ENCODE measurements at regions of chr21 and their contacts with region 1.

Region 1: GRCh38 chr21:29002442-29003144 is 9.9 kb upstream of the LTN1 start:
- DNase-seq: peak; percentile 97
- H3K4me3 ChIP-seq: peak overlapping the region; percentile 73
- H3K27ac ChIP-seq: peak overlapping the region; percentile 84 to 97
- H3K4me1 ChIP-seq: peaks cover 0 to 3% of the 10 kb centered on the region in 2 experiments; a peak in 2 of 4 replicates
- H3K27me3 ChIP-seq: no peaks in the 10 kb centered on the region
- CTCF ChIP-seq: no peak
- EP300 ChIP-seq: peak in 1 of 2 experiments; percentile 47; a peak in 2 of 4 replicates
- RAD21 ChIP-seq: no peak; the same call in 1 of the 2 replicates

Region 2: GRCh38 chr21:29018540-29018939 is 15.9 kb after region 1 on chr21:
- CTCF ChIA-PET with region 1: interaction called, 3 read pairs
- POLR2A ChIA-PET with region 1: interaction called, 55 read pairs
- DNase-seq: peak; percentile 35
- H3K4me3 ChIP-seq: peak overlapping the region; percentile 72 to 93
- H3K27ac ChIP-seq: peak overlapping the region; percentile 76 to 88
- H3K4me1 ChIP-seq: peaks cover 5 to 6% of the 10 kb centered on the region in 2 experiments; a peak in 2 of 4 replicates
- H3K27me3 ChIP-seq: no peaks in the 10 kb centered on the region
- CTCF ChIP-seq: no peak
- EP300 ChIP-seq: no peak
- RAD21 ChIP-seq: no peak

Region 3: DNA sequence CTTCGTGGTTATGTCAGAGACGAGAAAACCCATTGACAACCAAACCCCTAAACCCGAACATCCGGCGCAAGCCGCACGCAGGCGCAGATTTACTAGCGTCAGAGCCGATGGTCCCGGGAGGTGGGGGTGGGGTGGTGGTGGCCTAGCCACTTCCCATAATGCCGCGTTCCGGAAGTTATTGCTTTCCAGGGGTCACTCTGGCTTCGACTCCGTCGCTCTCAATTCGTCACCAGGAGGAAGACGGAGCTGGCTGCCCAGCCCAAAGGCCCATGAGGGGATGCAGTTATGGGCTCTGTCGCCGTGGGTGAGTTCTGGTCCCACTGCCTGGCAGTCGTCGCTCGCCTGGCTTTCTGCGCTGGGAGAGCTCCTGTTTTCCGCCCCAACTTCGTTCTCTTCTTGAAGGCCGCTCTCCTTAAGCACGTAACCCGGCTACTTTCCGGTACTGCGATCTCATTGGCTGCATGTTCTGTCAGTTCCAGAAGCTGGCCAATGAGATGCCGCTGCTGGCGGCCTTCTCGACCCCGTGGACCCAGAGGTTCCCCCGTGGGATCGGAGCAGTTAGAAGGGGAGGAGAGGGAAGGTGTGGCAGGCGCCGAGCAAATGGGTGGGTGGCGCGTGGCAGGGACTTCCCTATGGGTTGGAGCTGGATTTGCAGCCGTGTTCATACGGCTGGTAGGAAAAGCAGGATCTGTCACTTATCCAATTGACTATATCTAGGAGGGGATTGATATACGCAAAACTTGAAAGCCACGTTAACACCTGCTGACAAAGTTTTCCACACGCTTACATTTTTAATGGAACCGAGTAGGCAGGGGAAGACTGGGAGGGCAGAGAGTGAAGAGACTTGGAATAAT is 22.1 kb after region 1 on chr21 and contains the start of gene USP16:
- CTCF ChIA-PET with region 1: interaction called, 3 read pairs
- POLR2A ChIA-PET with region 1: interaction called, 55 read pairs
- DNase-seq: peak; percentile 95
- H3K4me3 ChIP-seq: peak within 1 kb of the TSS; percentile 69 to 70
- H3K27ac ChIP-seq: peak within 1 kb of the TSS; percentile 97
- H3K4me1 ChIP-seq: peaks cover 3 to 15% of the 10 kb centered on the region in 2 experiments; a peak in 3 of 4 replicates
- H3K27me3 ChIP-seq: no peaks in the 10 kb centered on the region
- CTCF ChIP-seq: peak; percentile 12; the same call in 1 of the 2 replicates
- EP300 ChIP-seq: no peak; a peak in 2 of 4 replicates
- RAD21 ChIP-seq: no peak
- polyA plus RNA-seq, gene USP16: 9.2 and 12.2 TPM in 2 replicates

Region 4: DNA sequence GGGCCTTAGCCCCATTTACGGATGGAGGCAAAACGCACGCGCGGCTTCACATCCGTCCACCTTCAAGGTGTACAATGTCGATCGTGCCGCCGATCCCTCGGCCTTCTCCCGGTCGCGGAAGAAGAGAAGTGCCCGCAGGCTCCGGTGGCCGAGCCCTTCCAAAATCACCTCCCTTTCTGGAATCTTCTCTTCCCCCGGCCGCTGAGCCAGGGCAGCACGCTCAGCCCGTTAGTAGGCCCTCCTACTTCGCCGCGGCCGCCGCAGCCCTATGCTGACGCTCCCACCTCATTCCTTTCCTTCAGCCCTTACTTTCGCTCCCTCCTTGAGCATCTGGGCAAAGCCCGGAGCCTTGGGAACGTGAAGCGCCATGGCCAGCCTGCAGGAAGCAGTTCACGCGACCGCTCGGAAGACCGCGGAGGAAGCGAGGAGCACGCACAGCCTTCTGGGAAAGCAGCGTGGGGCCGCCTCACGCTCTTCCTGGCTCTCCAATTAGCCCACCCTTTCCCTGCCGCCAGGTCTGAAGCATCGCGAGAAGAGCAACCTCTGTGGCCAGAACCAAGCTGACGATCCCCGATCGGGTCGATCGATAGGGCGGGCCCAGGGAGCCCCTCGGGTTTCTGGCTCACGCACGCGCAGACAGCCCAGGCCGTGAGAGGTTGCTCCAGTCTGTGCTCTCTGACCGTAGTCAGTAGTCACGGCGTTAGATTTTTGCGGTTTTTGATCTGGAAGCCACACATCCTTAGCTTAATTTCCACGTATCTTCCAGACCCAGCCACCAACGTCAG is 70.8 kb after region 1 on chr21 and contains the start of gene CCT8:
- CTCF ChIA-PET with region 1: no interaction called
- POLR2A ChIA-PET with region 1: interaction called, 12 read pairs
- DNase-seq: peak; percentile 98
- H3K4me3 ChIP-seq: peak within 1 kb of the TSS; percentile 97 to 100
- H3K27ac ChIP-seq: peak within 1 kb of the TSS; percentile 90 to 95
- H3K4me1 ChIP-seq: peaks cover 12 to 16% of the 10 kb centered on the region in 2 experiments; a peak in 3 of 4 replicates
- H3K27me3 ChIP-seq: no peaks in the 10 kb centered on the region
- CTCF ChIP-seq: no peak
- EP300 ChIP-seq: no peak
- RAD21 ChIP-seq: no peak
- polyA plus RNA-seq, gene CCT8: 102 and 105 TPM in 2 replicates